HepG2 (cell line): ENCODE measurements at regions of chr20 and their contacts with region 1.

Region 1: GRCh38 chr20:8019246-8019997 is at the start of gene TMX4:
- DNase-seq: peak; percentile 98
- ATAC-seq: peak; percentile 92
- H3K4me3 ChIP-seq: peak within 1 kb of the TSS; percentile 74 to 89 (median 87)
- H3K27ac ChIP-seq: peak within 1 kb of the TSS; percentile 94
- H3K4me1 ChIP-seq: peaks cover 19% of the 10 kb centered on the region
- H3K27me3 ChIP-seq: no peaks in the 10 kb centered on the region
- CTCF ChIP-seq: peak; percentile 76
- EP300 ChIP-seq: peak; percentile 32 to 85; a peak in 3 of 4 replicates
- POLR2A ChIP-seq: peak; percentile 97 to 99
- RAD21 ChIP-seq: peak; percentile 90
- total RNA-seq, gene TMX4: 15.4 and 21.4 TPM in 2 replicates

Region 2: GRCh38 chr20:7776148-7776547 is 243.3 kb before region 1 on chr20:
- CTCF ChIA-PET with region 1: no interaction called
- POLR2A ChIA-PET with region 1: no interaction called
- in situ Hi-C with region 1: no loop called
- intact Hi-C with region 1: no loop called
- DNase-seq: no peak
- ATAC-seq: no peak
- H3K4me3 ChIP-seq: no peak overlapping the region
- H3K27ac ChIP-seq: no peak overlapping the region
- H3K4me1 ChIP-seq: no peaks in the 10 kb centered on the region
- H3K27me3 ChIP-seq: no peaks in the 10 kb centered on the region
- CTCF ChIP-seq: no peak
- EP300 ChIP-seq: no peak
- POLR2A ChIP-seq: no peak
- RAD21 ChIP-seq: no peak

Region 3: GRCh38 chr20:7980332-7981046 is 38.9 kb before region 1 on chr20:
- CTCF ChIA-PET with region 1: interaction called, 5 read pairs
- POLR2A ChIA-PET with region 1: interaction called, 6 read pairs
- in situ Hi-C with region 1: no loop called
- intact Hi-C with region 1: loop called (anchors 1 kb)
- DNase-seq: peak; percentile 79
- ATAC-seq: peak; percentile 88
- H3K4me3 ChIP-seq: peak overlapping the region in 1 of 3 experiments; percentile 0; a peak in 1 of 6 replicates
- H3K27ac ChIP-seq: no peak overlapping the region
- H3K4me1 ChIP-seq: peaks cover 22% of the 10 kb centered on the region
- H3K27me3 ChIP-seq: no peaks in the 10 kb centered on the region
- CTCF ChIP-seq: peak; percentile 76
- EP300 ChIP-seq: no peak
- POLR2A ChIP-seq: no peak
- RAD21 ChIP-seq: peak; percentile 50

Region 4: DNA sequence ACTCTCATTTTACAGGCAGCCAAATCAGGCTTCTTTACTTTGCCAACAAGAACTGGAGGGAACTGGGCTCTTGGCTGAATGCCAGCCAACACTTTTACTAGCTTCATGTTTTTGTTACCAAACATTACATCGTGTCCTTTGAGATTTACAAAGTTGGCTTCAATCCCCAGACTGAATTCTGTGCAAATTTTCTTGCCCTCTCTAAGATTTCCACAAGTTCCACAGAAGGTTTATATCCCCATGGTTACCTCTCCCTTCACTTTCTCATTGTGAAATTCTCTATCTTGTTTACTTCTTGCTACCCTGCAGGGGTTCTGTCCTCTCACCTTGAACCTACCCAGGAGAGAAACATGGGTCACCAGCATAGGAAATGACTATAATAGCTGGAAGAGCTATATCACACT is 75.0 kb after region 1 on chr20:
- CTCF ChIA-PET with region 1: no interaction called
- POLR2A ChIA-PET with region 1: no interaction called
- in situ Hi-C with region 1: no loop called
- intact Hi-C with region 1: no loop called
- DNase-seq: no peak
- ATAC-seq: peak; percentile 74
- H3K4me3 ChIP-seq: no peak overlapping the region
- H3K27ac ChIP-seq: no peak overlapping the region
- H3K4me1 ChIP-seq: peaks cover 17% of the 10 kb centered on the region
- H3K27me3 ChIP-seq: peaks cover 0 to 4% of the 10 kb centered on the region in 2 experiments; a peak in 1 of 5 replicates
- CTCF ChIP-seq: no peak
- EP300 ChIP-seq: no peak
- POLR2A ChIP-seq: no peak
- RAD21 ChIP-seq: no peak

Region 5: DNA sequence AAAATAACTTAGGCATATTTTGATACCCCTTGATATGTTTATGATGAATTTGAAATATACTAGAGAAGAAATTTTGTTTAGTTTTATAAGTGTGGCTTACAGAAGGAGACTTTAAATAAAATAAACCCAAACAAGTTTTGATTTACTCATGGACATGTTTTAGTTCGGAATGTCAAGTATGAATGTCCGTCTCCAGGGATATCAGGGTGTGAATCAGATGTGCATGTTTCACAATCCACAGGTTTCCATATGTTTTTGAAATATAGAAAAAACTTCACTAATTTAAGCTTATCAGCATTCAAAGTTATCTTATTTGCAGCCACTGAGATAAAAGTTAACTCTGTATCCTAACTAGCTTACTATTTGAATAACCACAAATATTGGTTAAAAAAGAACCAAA is 164.1 kb after region 1 on chr20:
- CTCF ChIA-PET with region 1: no interaction called
- POLR2A ChIA-PET with region 1: no interaction called
- in situ Hi-C with region 1: no loop called
- intact Hi-C with region 1: no loop called
- DNase-seq: no peak
- ATAC-seq: no peak
- H3K4me3 ChIP-seq: no peak overlapping the region
- H3K27ac ChIP-seq: no peak overlapping the region
- H3K4me1 ChIP-seq: peaks cover 23% of the 10 kb centered on the region
- H3K27me3 ChIP-seq: no peaks in the 10 kb centered on the region
- CTCF ChIP-seq: no peak
- EP300 ChIP-seq: no peak
- POLR2A ChIP-seq: no peak
- RAD21 ChIP-seq: no peak

Region 6: DNA sequence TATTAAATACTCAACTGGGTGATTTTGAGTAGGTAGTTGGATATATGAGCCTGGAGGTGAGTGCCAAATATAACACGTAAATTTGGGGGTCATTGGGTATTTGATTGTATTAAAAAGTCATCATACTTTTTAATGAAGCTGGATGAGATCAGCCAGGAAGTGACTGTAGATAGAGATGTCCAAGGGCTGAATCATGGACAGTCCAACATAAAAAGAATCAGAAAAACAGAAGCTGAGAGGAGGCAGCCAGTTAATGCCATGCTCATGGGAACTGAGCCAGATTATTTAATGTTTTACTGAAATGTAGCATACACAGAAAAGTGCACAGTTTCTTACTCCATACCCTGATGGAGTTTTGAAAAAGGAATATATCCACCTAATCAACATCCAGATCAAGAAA is 613.9 kb after region 1 on chr20:
- CTCF ChIA-PET with region 1: no interaction called
- POLR2A ChIA-PET with region 1: no interaction called
- in situ Hi-C with region 1: no loop called
- intact Hi-C with region 1: no loop called
- DNase-seq: no peak
- ATAC-seq: no peak
- H3K4me3 ChIP-seq: no peak overlapping the region
- H3K27ac ChIP-seq: no peak overlapping the region
- H3K4me1 ChIP-seq: no peaks in the 10 kb centered on the region
- H3K27me3 ChIP-seq: no peaks in the 10 kb centered on the region
- CTCF ChIP-seq: no peak
- EP300 ChIP-seq: no peak
- POLR2A ChIP-seq: no peak
- RAD21 ChIP-seq: no peak